ENCODE measurements at regions of chr6 and their contacts with region 1.

Region 1: GRCh38 chr6:147868427-147869190 is 360.1 kb downstream of the SAMD5 start:
- DNase-seq: no peak
- H3K4me3 ChIP-seq: no peak overlapping the region
- H3K27ac ChIP-seq: no peak overlapping the region
- H3K4me1 ChIP-seq: no peaks in the 10 kb centered on the region
- H3K27me3 ChIP-seq: no peaks in the 10 kb centered on the region
- CTCF ChIP-seq: no peak
- POLR2A ChIP-seq: no peak

Region 2: GRCh38 chr6:147738838-147739162 is 129.8 kb before region 1 on chr6:
- intact Hi-C with region 1: no loop called
- DNase-seq: no peak
- H3K4me3 ChIP-seq: no peak overlapping the region
- H3K27ac ChIP-seq: peak overlapping the region; percentile 29 to 56
- H3K4me1 ChIP-seq: no peaks in the 10 kb centered on the region
- H3K27me3 ChIP-seq: no peaks in the 10 kb centered on the region
- CTCF ChIP-seq: no peak
- POLR2A ChIP-seq: no peak

Region 3: DNA sequence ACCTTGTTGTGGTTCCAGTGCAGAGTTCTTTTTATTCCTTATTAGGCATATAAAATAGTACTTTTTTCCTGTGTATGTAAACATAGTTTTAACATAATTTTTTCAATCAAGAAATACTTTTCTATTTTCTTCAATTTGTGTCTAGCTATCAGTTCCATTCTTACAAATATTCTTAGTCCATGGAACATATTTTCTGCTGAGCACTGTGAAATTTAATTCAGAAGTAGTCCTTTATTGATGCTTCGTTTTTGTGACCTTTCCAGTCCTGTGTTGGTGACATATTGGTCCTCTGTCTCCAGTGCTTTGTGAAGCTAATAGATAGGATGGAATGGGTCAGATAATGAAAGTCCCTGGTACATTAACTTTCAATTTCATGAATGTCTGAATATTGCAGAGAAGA is 35.0 kb before region 1 on chr6:
- intact Hi-C with region 1: loop called (anchors 2 kb)
- DNase-seq: no peak
- H3K4me3 ChIP-seq: no peak overlapping the region
- H3K27ac ChIP-seq: no peak overlapping the region
- H3K4me1 ChIP-seq: no peaks in the 10 kb centered on the region
- H3K27me3 ChIP-seq: no peaks in the 10 kb centered on the region
- CTCF ChIP-seq: no peak
- POLR2A ChIP-seq: no peak

Measured in breast epithelium (tissue), 4 donors.